MCF 10A (cell line): ENCODE measurements at regions of chr1 and their contacts with region 1.

Region 1: DNA sequence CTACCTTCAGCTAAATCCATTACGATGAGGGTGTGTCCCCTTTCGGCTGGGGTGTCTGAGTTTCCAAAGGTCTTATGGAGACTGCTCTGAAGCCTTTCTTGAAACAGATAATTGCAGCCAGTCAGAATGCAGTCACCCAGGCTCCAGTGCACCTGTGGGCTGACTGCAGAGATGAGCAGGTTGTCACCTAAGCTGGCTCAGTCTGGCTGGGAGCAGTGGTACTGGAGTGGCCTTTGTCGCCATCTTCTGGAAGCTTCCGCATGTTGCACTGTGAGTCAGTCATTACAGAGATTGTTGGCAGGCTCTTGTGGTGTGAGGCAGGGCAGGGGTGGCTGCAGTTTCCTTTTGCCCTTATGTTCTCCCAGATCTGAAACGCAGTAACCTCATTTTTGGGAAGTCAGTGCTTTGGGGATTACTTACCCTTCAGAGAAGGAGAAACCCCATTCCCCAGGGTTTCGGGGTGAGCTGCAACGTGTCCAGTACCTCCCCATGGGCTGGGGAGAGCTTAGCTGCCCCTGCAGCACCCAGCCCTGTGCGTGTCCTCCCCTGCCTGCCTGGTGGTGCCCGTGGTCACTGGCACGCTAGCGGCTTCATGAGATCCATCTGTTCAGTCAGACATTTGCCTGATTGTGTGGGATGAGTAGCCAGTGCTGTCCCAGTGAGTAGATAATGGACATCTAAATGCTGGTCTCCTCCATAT is 48.0 kb downstream of the SMYD2 start:
- DNase-seq: peak; percentile 95
- H3K4me3 Mint-ChIP-seq: no peak overlapping the region
- H3K27ac Mint-ChIP-seq: no peak overlapping the region
- H3K4me1 Mint-ChIP-seq: no peaks in the 10 kb centered on the region
- H3K27me3 Mint-ChIP-seq: no peaks in the 10 kb centered on the region
- CTCF ChIP-seq: peak; percentile 100

Region 2: DNA sequence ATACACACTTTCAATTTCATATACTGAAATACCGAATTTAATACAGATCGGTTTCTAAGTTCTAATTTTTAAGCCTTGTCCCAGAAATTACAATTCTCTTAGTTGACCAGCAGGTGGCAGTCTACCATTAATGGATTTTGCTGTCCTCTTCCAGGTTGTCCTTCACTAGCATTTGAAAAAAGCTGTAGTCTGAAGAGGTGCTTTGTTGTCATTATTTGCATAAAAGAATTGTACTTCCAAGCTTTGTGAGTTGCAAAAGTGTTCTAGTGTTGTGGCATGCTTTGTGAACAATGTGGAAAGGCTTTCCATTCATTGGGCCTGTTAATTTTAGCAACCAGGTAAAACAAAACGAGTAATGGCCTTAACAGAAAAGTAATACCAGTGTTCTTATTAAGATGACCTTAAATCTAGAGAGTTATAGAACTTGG is 1084.2 kb before region 1 on chr1:
- CTCF ChIA-PET with region 1: interaction called, 19 read pairs
- POLR2A ChIA-PET with region 1: no interaction called
- intact Hi-C with region 1: loop called (anchors 1 kb)
- DNase-seq: peak; percentile 88
- H3K4me3 Mint-ChIP-seq: no peak overlapping the region
- H3K27ac Mint-ChIP-seq: peak overlapping the region; percentile 17
- H3K4me1 Mint-ChIP-seq: no peaks in the 10 kb centered on the region
- H3K27me3 Mint-ChIP-seq: no peaks in the 10 kb centered on the region
- CTCF ChIP-seq: peak; percentile 97

Region 3: DNA sequence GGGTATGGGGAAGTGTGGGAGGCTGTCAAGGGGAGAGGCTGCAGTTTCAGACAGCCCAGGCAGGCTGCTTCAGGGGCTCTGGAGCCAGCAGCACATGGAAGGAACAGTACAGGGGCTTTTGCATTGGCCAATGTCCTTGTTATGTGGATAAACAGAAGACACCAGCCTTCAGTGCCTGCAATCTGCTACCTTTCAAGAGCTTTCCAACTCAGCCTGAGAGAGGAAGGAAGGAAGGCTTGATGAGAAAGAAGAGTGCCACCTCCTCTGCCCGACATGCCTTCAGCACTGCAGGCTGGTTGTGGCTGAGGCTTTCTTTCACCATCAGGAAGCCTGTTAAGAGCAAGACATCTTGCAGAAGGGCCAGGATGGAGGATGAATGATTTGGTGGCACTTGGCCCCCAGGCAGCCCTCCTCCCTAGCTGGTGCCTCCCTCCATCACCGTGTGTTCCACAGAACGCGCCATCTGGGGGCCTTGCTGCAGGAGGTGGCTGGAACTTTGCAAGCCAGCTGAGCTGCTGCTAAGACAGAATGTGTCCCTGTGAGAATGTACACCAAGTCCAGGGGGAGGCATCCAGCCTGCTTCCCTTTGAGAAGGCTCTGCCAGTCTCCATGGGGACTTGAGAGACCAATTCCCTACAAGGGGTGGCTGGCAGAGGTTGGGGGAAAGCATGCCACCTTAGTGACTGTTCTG is 713.5 kb before region 1 on chr1:
- CTCF ChIA-PET with region 1: no interaction called
- POLR2A ChIA-PET with region 1: no interaction called
- intact Hi-C with region 1: no loop called
- DNase-seq: no peak
- H3K4me3 Mint-ChIP-seq: no peak overlapping the region
- H3K27ac Mint-ChIP-seq: no peak overlapping the region
- H3K4me1 Mint-ChIP-seq: no peaks in the 10 kb centered on the region
- H3K27me3 Mint-ChIP-seq: peaks cover 55% of the 10 kb centered on the region
- CTCF ChIP-seq: no peak

Region 4: DNA sequence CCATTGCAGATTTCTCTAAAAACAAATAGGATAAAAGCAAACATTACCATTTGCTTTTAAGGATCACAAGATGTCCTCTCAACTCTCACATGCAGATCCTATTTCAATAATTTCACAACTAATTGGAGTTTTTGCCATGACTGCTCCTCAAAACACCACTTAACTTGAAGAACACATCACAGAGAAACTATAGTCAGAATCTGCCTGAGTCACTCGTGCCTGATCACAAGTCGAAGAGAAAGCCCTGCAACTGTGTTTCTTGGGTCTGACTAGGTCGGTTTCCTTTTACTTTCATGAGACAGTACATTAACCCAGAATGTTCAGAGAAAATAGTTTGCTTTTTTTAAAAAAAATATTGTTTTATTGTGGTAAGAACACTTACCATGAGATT is 94.3 kb before region 1 on chr1:
- CTCF ChIA-PET with region 1: interaction called, 804 read pairs
- POLR2A ChIA-PET with region 1: no interaction called
- intact Hi-C with region 1: no loop called
- DNase-seq: no peak
- H3K4me3 Mint-ChIP-seq: no peak overlapping the region
- H3K27ac Mint-ChIP-seq: no peak overlapping the region
- H3K4me1 Mint-ChIP-seq: no peaks in the 10 kb centered on the region
- H3K27me3 Mint-ChIP-seq: peaks cover 45% of the 10 kb centered on the region
- CTCF ChIP-seq: no peak

Region 5: GRCh38 chr1:214362188-214362882 is 33.4 kb after region 1 on chr1:
- CTCF ChIA-PET with region 1: interaction called, 364 read pairs
- POLR2A ChIA-PET with region 1: no interaction called
- intact Hi-C with region 1: no loop called
- DNase-seq: no peak
- H3K4me3 Mint-ChIP-seq: no peak overlapping the region
- H3K27ac Mint-ChIP-seq: peak overlapping the region; percentile 50
- H3K4me1 Mint-ChIP-seq: peaks cover 6% of the 10 kb centered on the region
- H3K27me3 Mint-ChIP-seq: no peaks in the 10 kb centered on the region
- CTCF ChIP-seq: no peak

Region 6: GRCh38 chr1:214422137-214422671 is 93.3 kb after region 1 on chr1:
- CTCF ChIA-PET with region 1: interaction called, 10 read pairs
- POLR2A ChIA-PET with region 1: no interaction called
- intact Hi-C with region 1: no loop called
- DNase-seq: peak; percentile 84
- H3K4me3 Mint-ChIP-seq: peak overlapping the region; percentile 6
- H3K27ac Mint-ChIP-seq: peak overlapping the region; percentile 80
- H3K4me1 Mint-ChIP-seq: peaks cover 77% of the 10 kb centered on the region
- H3K27me3 Mint-ChIP-seq: no peaks in the 10 kb centered on the region
- CTCF ChIP-seq: no peak

Region 7: DNA sequence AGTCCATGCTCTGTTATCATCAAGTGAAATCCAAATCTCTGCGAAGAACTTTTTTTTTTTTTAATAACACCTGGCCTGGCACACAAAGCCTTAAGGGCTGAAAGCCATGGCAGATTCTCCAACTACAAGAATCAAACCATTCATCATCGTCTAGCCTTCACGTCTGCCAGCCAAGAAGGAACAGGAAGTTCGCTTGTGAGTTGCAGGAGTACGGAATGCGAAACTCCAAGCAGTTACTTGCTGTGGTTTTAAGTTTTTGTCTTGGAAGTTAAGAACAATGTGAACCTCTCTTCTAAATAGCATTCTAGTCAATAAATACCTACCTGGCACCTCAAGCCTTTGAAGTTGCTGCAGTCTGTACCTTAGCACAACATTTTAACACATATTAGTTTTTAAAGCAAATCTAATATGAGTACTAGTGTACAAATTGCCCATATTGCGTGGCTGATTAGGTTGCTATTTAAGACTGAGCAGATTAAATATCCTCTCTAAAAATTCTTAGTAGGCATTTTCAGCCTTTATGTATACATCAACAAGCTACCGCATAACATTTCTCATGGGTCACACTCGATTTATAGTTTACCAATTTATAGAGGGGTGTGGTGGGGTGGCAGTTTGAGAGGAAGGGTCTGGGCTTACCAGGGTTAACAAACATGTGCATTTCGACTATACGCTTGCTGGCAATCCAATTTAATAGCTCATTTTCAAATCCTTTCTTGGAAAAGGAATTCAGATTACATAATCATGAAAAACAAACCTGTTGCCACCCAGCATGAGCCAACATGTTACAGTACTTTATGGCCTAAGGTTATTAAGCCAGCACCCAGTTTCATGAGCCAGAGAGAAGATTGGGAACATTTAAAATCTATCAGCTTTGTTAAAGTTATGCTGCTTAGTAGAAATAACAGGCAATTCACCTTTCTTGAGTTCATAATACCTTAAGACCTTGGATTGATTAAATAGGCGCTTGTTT is 244.8 kb after region 1 on chr1:
- CTCF ChIA-PET with region 1: interaction called, 958 read pairs
- POLR2A ChIA-PET with region 1: interaction called, 3 read pairs
- intact Hi-C with region 1: no loop called
- DNase-seq: peak; percentile 97
- H3K4me3 Mint-ChIP-seq: peak overlapping the region; percentile 59
- H3K27ac Mint-ChIP-seq: peak overlapping the region; percentile 95
- H3K4me1 Mint-ChIP-seq: peaks cover 65% of the 10 kb centered on the region
- H3K27me3 Mint-ChIP-seq: no peaks in the 10 kb centered on the region
- CTCF ChIP-seq: no peak

Region 8: DNA sequence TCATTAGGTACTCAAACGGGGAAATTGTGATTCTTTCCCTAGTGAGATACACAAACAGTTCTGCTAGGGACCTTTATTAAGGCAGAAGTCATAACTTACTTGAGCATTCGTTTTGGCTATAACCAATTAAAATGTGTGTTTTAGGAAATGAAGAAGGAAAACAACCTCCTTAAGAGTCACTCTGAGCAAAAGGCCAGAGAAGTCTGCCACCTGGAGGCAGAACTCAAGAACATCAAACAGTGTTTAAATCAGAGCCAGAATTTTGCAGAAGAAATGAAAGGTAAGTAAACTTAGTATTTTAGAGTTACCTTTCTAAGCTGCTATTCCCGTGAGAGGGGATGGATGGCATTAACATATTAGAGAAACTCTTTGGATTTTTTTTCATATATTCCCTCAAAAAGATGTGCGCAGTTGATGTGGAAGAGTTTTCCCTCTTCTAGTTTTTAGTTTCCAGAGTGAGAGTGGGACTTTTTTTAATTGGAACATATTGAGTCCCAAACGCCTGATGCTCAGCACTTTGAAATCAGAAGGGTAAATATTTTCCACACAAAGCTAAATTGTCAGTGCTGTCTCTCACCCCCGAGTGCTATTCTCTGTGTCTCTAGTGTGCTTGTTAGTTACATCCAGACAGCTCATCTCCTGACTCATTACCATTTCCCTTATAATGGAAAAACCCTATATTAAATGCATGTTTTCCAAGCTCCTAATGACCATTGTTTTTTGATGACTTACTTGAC is 309.0 kb after region 1 on chr1:
- CTCF ChIA-PET with region 1: interaction called, 224 read pairs
- POLR2A ChIA-PET with region 1: no interaction called
- intact Hi-C with region 1: no loop called
- DNase-seq: peak; percentile 71
- H3K4me3 Mint-ChIP-seq: no peak overlapping the region
- H3K27ac Mint-ChIP-seq: peak overlapping the region; percentile 22
- H3K4me1 Mint-ChIP-seq: no peaks in the 10 kb centered on the region
- H3K27me3 Mint-ChIP-seq: no peaks in the 10 kb centered on the region
- CTCF ChIP-seq: peak; percentile 87